Sigmoid colon (tissue), 7 donors: ENCODE measurements at regions of chrX and their contacts with region 1.

Region 1: GRCh38 chrX:103918581-103919269 is 43.7 kb upstream of the TMSB15B start:
- DNase-seq: peak; percentile 85
- H3K4me3 ChIP-seq: peak overlapping the region; percentile 39 to 62 (median 59)
- H3K27ac ChIP-seq: peak overlapping the region; percentile 83 to 84 (median 83)
- H3K4me1 ChIP-seq: no peaks in the 10 kb centered on the region
- H3K27me3 ChIP-seq: no peaks in the 10 kb centered on the region
- CTCF ChIP-seq: no peak
- EP300 ChIP-seq: no peak
- POLR2A ChIP-seq: no peak

Region 2: DNA sequence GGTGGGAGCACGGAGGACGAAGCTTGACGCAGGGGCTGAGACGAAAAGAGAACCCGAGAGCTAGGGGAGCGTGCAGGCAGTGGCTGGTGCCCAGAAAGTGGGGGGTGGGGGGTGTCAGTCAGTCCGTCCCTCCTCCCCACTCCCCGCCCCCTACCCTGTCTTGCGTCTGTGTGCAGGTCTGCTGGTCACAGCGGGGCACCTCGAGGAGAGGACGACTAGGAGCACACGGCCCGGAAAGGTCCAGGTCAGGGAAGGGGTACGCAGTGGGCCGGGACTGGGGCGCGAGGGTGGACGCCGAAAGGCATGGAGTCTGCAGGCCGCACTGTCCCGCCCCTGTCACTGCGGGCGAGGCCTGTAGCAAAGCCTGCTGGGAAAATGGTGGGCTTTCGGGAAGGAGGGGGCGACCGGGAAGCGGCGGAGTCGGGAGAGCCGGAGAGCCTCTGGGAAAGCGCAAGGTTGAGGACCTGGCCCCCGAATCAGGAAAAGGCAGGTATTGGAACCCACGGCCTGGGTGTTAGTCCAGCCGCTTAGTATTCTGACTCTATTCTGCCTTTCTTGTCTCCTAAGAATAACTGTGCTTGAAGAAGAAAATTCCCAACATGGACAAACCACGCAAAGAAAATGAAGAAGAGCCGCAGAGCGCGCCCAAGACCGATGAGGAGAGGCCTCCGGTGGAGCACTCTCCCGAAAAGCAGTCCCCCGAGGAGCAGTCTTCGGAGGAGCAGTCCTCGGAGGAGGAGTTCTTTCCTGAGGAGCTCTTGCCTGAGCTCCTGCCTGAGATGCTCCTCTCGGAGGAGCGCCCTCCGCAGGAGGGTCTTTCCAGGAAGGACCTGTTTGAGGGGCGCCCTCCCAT is 289.2 kb before region 1 on chrX:
- intact Hi-C with region 1: no loop called
- DNase-seq: peak; percentile 83
- H3K4me3 ChIP-seq: peak overlapping the region; percentile 46 to 65 (median 60)
- H3K27ac ChIP-seq: peak overlapping the region; percentile 89 to 95 (median 92)
- H3K4me1 ChIP-seq: peaks cover 0 to 17% (median 3%) of the 10 kb centered on the region in 4 donors
- H3K27me3 ChIP-seq: no peaks in the 10 kb centered on the region
- CTCF ChIP-seq: peak in 2 of 4 experiments; percentile 15 to 30
- EP300 ChIP-seq: no peak
- POLR2A ChIP-seq: peak; percentile 15 to 21

Region 3: GRCh38 chrX:103845165-103845653 is 73.5 kb before region 1 on chrX:
- intact Hi-C with region 1: loop called (anchors 5 kb)
- DNase-seq: peak; percentile 76
- H3K4me3 ChIP-seq: no peak overlapping the region
- H3K27ac ChIP-seq: peak overlapping the region in 1 of 4 donors; percentile 1
- H3K4me1 ChIP-seq: no peaks in the 10 kb centered on the region
- H3K27me3 ChIP-seq: no peaks in the 10 kb centered on the region
- CTCF ChIP-seq: peak in 3 of 4 experiments; percentile 42 to 50 (median 44)
- EP300 ChIP-seq: no peak
- POLR2A ChIP-seq: no peak

Region 4: DNA sequence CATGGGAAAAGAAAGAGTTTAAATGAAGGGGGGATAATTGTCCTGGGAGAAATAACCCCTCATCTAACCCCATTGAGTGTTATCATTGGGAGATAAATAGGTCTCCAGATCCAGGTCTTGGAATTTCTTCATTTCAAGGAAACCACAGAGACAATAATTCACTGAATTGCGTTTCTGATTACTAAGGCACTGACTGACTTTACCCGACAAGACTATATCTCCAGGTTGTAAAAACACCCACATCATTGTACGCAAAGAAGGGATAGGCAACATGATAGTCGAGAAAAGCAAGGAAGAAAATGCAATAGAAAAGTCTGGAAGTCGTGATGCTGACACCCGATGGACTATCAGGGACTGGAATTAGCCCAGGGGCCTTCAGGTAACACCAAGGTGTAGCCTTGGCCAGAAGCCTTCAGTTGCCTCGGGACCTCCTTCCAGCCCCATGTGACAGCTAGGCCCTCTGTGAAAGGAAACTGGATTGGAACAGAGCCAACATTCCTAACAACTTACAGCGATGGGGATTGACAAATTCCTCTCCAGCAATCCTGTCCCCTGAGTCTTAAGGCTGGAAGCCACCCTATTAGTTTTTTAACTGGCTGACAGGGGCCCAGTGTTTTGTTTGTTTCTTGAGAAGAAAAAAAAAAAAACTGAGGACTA is 40.1 kb before region 1 on chrX:
- intact Hi-C with region 1: no loop called
- DNase-seq: no peak
- H3K4me3 ChIP-seq: no peak overlapping the region
- H3K27ac ChIP-seq: no peak overlapping the region
- H3K4me1 ChIP-seq: peaks cover 0 to 4% (median 0%) of the 10 kb centered on the region in 4 donors
- H3K27me3 ChIP-seq: no peaks in the 10 kb centered on the region
- CTCF ChIP-seq: no peak
- EP300 ChIP-seq: no peak
- POLR2A ChIP-seq: no peak

Region 5: DNA sequence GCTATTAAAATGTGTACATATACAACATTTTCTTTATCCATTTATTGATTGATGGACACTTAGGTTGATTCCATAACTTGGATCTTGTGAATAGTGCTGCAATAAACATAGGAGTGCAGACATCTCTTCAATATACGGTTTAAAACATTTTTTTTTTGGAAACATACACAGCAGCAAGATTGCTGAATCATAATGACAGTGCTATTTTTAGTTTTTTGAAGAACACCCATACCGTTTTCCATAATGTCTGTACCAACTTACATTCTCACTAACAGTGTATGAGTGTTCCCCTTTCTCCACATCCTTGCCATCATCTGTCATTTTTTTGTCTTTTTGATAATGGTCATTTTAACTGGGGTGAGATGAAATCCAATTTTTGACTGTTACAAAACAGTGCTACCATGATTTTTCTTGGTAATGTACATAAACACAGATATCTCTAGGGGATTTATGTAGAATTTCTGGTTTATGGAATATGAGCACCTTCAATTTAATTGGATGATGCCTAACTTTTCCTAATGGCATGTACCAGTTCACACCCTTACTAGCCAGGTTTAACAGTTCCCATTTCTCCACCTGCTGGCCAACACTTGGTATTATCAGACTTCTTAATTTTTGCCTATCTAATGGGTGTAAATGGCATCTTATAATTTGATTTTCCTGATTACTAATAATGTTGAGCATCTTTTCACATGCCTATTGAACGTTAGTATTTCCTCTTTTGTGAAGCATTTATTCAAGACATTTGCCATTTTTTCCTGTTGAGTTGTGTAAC is 22.7 kb after region 1 on chrX:
- intact Hi-C with region 1: loop called (anchors 1 kb)
- DNase-seq: no peak
- H3K4me3 ChIP-seq: no peak overlapping the region
- H3K27ac ChIP-seq: no peak overlapping the region
- H3K4me1 ChIP-seq: no peaks in the 10 kb centered on the region
- H3K27me3 ChIP-seq: no peaks in the 10 kb centered on the region
- CTCF ChIP-seq: peak in 3 of 4 experiments; percentile 9 to 32 (median 29)
- EP300 ChIP-seq: no peak
- POLR2A ChIP-seq: no peak

Region 6: GRCh38 chrX:104113222-104113965 is 194.7 kb after region 1 on chrX:
- intact Hi-C with region 1: loop called (anchors 2 kb)
- DNase-seq: peak; percentile 69
- H3K4me3 ChIP-seq: peak overlapping the region; percentile 40 to 61 (median 59)
- H3K27ac ChIP-seq: peak overlapping the region; percentile 77 to 83 (median 82)
- H3K4me1 ChIP-seq: peaks cover 0 to 8% (median 0%) of the 10 kb centered on the region in 4 donors
- H3K27me3 ChIP-seq: no peaks in the 10 kb centered on the region
- CTCF ChIP-seq: peak in 2 of 4 experiments; percentile 36 to 43
- EP300 ChIP-seq: no peak
- POLR2A ChIP-seq: no peak